Ascending aorta (tissue), 2 donors: ENCODE measurements at regions of chrX and their contacts with region 1.

Region 1: GRCh38 chrX:103214870-103215424 is at the start of gene BEX4:
- DNase-seq: peak; percentile 33 to 89
- H3K4me3 ChIP-seq: peak within 1 kb of the TSS; percentile 70 to 75
- H3K27ac ChIP-seq: peak within 1 kb of the TSS; percentile 76 to 85
- H3K4me1 ChIP-seq: no peaks in the 10 kb centered on the region
- H3K27me3 ChIP-seq: no peaks in the 10 kb centered on the region
- CTCF ChIP-seq: no peak
- total RNA-seq, gene BEX4: 11.0 TPM

Region 2: DNA sequence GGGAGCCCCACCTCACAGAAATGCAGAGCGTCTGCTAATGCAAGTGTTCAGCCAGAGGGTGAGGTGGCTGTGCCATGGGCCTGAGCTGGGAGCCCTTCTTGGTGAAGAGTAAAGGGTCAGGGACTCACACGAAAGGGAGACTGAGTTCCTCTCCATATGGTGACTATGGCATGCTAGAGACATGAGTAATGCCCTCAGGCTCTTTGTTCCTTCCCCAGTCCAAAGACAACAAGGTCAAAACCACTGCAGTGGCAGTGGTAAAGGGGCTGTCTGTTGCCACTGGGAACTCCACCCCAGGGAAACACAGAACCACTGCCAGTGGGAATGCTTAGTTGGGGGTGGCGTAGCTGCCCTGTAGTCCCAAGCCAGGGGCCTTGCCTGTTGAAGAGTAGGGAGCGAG is 255.5 kb before region 1 on chrX:
- intact Hi-C with region 1: no loop called
- DNase-seq: no peak
- H3K4me3 ChIP-seq: no peak overlapping the region
- H3K27ac ChIP-seq: no peak overlapping the region
- H3K4me1 ChIP-seq: no peaks in the 10 kb centered on the region
- H3K27me3 ChIP-seq: no peaks in the 10 kb centered on the region
- CTCF ChIP-seq: no peak

Region 3: GRCh38 chrX:103002576-103002975 is 212.4 kb before region 1 on chrX:
- intact Hi-C with region 1: no loop called
- DNase-seq: no peak
- H3K4me3 ChIP-seq: no peak overlapping the region
- H3K27ac ChIP-seq: no peak overlapping the region
- H3K4me1 ChIP-seq: no peaks in the 10 kb centered on the region
- H3K27me3 ChIP-seq: no peaks in the 10 kb centered on the region
- CTCF ChIP-seq: no peak

Region 4: GRCh38 chrX:103151799-103152198 is 63.1 kb before region 1 on chrX:
- intact Hi-C with region 1: loop called (anchors 5 kb)
- DNase-seq: no peak
- H3K4me3 ChIP-seq: no peak overlapping the region
- H3K27ac ChIP-seq: no peak overlapping the region
- H3K4me1 ChIP-seq: peaks cover 0 to 3% of the 10 kb centered on the region in 2 donors
- H3K27me3 ChIP-seq: no peaks in the 10 kb centered on the region
- CTCF ChIP-seq: no peak

Region 5: GRCh38 chrX:103254921-103255493 is 40.1 kb after region 1 on chrX and contains the start of gene TCEAL8:
- intact Hi-C with region 1: loop called (anchors 1 kb)
- DNase-seq: peak; percentile 45 to 90
- H3K4me3 ChIP-seq: peak within 1 kb of the TSS; percentile 56 to 73
- H3K27ac ChIP-seq: peak within 1 kb of the TSS; percentile 76 to 83
- H3K4me1 ChIP-seq: peaks cover 0 to 4% of the 10 kb centered on the region in 2 donors
- H3K27me3 ChIP-seq: no peaks in the 10 kb centered on the region
- CTCF ChIP-seq: no peak
- total RNA-seq, gene TCEAL8: 39.1 TPM

Region 6: GRCh38 chrX:103356130-103356798 is 141.3 kb after region 1 on chrX and contains the start of gene TCEAL9:
- intact Hi-C with region 1: loop called (anchors 10 kb)
- DNase-seq: peak in 1 of 2 donors; percentile 79
- H3K4me3 ChIP-seq: peak within 1 kb of the TSS; percentile 68 to 72
- H3K27ac ChIP-seq: peak within 1 kb of the TSS; percentile 86 to 89
- H3K4me1 ChIP-seq: no peaks in the 10 kb centered on the region
- H3K27me3 ChIP-seq: no peaks in the 10 kb centered on the region
- CTCF ChIP-seq: no peak
- total RNA-seq, gene TCEAL9: 20.9 TPM

Region 7: GRCh38 chrX:103464774-103465117 is 249.8 kb after region 1 on chrX:
- intact Hi-C with region 1: loop called (anchors 1 kb)
- DNase-seq: peak in 1 of 2 donors; percentile 81
- H3K4me3 ChIP-seq: peak overlapping the region; percentile 33 to 61
- H3K27ac ChIP-seq: no peak overlapping the region
- H3K4me1 ChIP-seq: no peaks in the 10 kb centered on the region
- H3K27me3 ChIP-seq: no peaks in the 10 kb centered on the region
- CTCF ChIP-seq: peak; percentile 52 to 73 (median 69)